Dendritic cell treated with granulocyte-macrophage colony-stimulating factor and Interleukin-4, amounts not matched to agents 40 ng/mL and 50 ng/mL, for 4 days (primary cell): ENCODE measurements at regions of chr9 and their contacts with region 1.

Region 1: GRCh38 chr9:114906908-114907571 is 23.4 kb downstream of the TNFSF8 start:
- H3K4me3 Mint-ChIP-seq: no peak overlapping the region
- H3K27ac Mint-ChIP-seq: no peak overlapping the region
- H3K4me1 Mint-ChIP-seq: peaks cover 33% of the 10 kb centered on the region
- H3K27me3 Mint-ChIP-seq: no peaks in the 10 kb centered on the region

Region 2: DNA sequence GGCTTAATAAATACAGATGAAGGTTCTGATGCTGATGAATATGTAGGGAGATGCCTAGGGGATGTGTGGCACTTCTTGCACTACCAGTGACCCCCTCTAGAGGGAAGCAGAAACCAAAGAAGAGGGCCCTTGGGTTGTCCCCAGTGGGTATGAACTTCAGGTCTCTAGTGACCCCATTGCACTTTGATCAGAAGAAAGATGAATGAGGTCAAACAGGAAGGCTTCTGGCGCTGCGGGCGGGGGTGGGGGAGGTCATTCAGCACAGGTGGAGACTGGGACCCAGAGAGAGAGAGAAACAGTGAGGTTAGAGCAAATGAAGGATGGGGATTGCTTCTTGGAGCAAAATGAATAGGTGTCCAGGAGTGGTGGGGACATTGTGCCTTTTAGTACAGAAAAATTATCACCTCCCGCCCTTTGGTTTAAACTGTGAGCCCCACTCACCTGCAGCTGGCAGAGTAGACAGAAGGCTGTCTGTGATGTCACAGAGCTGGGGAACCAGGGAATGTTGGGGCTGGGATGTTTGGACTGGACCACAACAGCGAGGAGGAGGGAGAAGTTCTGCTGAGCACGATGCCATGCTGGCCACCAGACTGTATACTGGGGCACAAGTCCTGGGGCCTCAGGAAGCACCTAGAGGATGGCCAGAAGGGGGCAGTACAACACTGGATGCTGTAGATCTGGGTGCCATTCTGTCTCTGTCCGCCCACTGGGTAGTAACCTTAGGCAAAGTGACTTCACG is 225.3 kb before region 1 on chr9 and contains the start of gene TEX48:
- intact Hi-C with region 1: loop called (anchors 2 kb)
- H3K4me3 Mint-ChIP-seq: no peak within 1 kb of the TSS
- H3K27ac Mint-ChIP-seq: no peak within 1 kb of the TSS
- H3K4me1 Mint-ChIP-seq: peaks cover 26% of the 10 kb centered on the region
- H3K27me3 Mint-ChIP-seq: peaks cover 2% of the 10 kb centered on the region

Region 3: GRCh38 chr9:114738581-114739316 is 168.3 kb before region 1 on chr9:
- intact Hi-C with region 1: loop called (anchors 1 kb)
- H3K4me3 Mint-ChIP-seq: no peak overlapping the region
- H3K27ac Mint-ChIP-seq: peak overlapping the region; percentile 30
- H3K4me1 Mint-ChIP-seq: peaks cover 5% of the 10 kb centered on the region
- H3K27me3 Mint-ChIP-seq: peaks cover 14% of the 10 kb centered on the region

Region 4: DNA sequence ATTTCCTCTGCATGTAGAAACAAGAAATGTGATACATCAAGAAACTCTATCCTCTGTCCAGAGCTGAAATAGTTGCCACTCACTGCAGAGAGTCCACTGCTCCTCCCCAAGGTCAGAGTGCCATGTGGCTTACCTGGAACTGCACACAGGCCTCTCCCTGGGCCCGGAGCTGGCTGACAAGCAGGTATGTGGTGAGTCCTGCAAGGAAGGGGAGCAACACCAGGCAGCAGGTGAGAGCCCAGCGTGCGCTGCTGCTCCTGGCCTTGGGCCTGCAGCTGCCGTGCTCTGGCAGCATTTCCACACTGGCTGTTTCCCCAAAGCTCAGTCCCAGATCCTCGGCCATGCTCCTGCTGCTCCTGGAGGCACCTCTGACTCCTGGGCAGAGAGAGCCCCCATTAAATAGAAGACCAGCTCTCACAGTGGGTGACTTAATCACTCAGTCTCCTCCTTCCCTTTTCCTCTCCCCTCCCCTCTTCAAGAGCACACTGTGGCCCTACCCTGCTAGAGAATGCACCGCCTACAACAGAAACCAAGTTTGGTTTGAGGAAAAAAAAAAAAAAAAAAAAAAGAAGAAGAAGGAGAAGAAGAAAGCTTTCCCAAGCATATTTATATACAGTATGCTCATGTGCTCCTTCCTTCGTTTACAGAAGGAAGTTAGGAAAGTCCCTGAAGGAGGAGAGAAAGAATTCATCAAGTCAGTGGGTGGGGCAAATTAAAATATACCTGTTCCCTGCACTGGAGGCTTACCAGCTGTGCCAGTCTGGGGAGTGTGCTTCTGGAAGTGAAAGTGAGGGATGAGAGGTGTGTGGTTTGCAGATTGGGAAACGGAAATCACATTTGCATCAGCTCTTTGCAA is 101.1 kb before region 1 on chr9 and contains the start of gene TNFSF15:
- intact Hi-C with region 1: loop called (anchors 10 kb)
- H3K4me3 Mint-ChIP-seq: peak within 1 kb of the TSS; percentile 50
- H3K27ac Mint-ChIP-seq: peak within 1 kb of the TSS; percentile 78
- H3K4me1 Mint-ChIP-seq: peaks cover 24% of the 10 kb centered on the region
- H3K27me3 Mint-ChIP-seq: peaks cover 8% of the 10 kb centered on the region

Region 5: GRCh38 chr9:115013998-115014397 is 107.0 kb after region 1 on chr9:
- intact Hi-C with region 1: loop called (anchors 2 kb)
- H3K4me3 Mint-ChIP-seq: no peak overlapping the region
- H3K27ac Mint-ChIP-seq: no peak overlapping the region
- H3K4me1 Mint-ChIP-seq: peaks cover 66% of the 10 kb centered on the region
- H3K27me3 Mint-ChIP-seq: peaks cover 23% of the 10 kb centered on the region

Region 6: GRCh38 chr9:115524453-115525059 is 617.5 kb after region 1 on chr9:
- intact Hi-C with region 1: loop called (anchors 10 kb)
- H3K4me3 Mint-ChIP-seq: no peak overlapping the region
- H3K27ac Mint-ChIP-seq: no peak overlapping the region
- H3K4me1 Mint-ChIP-seq: no peaks in the 10 kb centered on the region
- H3K27me3 Mint-ChIP-seq: no peaks in the 10 kb centered on the region